Activated CD8-positive, alpha-beta T cell treated with anti-CD3 and anti-CD28 coated beads for 36 hours (primary cell): ENCODE measurements at regions of chr11 and their contacts with region 1.

Region 1: GRCh38 chr11:3834664-3835461 is 5.9 kb downstream of the RHOG start:
- DNase-seq: no peak
- ATAC-seq: no peak
- H3K4me3 Mint-ChIP-seq: peak overlapping the region; percentile 87
- H3K27ac Mint-ChIP-seq: peak overlapping the region; percentile 91
- H3K4me1 Mint-ChIP-seq: peaks cover 74% of the 10 kb centered on the region
- H3K27me3 Mint-ChIP-seq: no peaks in the 10 kb centered on the region
- CTCF ChIP-seq: no peak

Region 2: DNA sequence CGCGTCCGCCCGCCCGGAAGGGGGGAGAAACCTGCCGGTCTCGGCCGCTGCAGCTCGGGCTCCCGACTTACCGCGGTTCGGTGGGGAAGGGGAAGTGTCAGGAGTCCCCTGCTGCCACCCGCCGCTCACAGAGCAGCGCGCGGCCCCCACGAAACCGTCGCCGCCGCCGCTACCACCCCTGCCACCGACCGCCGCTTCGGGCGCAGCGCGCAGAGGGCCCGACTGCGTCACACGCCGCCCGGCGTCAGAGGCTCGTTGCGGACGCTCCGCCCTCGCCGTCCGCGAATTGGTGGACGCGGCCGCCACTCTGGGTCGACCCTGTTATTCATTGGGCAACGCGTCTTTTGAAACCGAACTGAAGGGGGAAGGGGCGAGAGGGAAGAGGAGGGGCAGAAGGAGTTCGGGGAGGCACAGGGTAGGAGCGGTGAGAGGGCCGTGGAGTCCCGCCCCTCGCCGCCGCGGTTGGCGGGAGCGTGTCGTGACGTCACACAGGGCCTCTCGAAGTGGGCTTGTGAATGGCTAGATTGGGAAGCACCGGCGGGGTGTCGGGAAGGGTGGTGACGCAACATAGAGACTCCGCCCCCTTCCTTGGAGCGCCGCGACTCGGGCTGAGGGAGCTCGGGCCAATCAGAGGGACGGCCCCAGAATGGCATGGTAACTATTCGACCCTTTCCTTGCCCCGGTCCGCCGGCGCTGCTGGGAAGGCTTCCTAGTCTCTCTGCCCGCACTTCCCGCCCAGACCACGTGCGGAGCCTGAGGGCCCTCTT is 37.4 kb before region 1 on chr11 and contains the start of gene NUP98:
- CTCF ChIA-PET with region 1: interaction called, 3 read pairs
- POLR2A ChIA-PET with region 1: interaction called, 4 read pairs
- intact Hi-C with region 1: loop called (anchors 5 kb)
- DNase-seq: peak; percentile 100
- ATAC-seq: peak; percentile 98
- H3K4me3 Mint-ChIP-seq: peak within 1 kb of the TSS; percentile 90
- H3K27ac Mint-ChIP-seq: peak within 1 kb of the TSS; percentile 99
- H3K4me1 Mint-ChIP-seq: peaks cover 43% of the 10 kb centered on the region
- H3K27me3 Mint-ChIP-seq: no peaks in the 10 kb centered on the region
- CTCF ChIP-seq: no peak
- total RNA-seq, gene NUP98: 88.4 to 89.9 TPM

Region 3: DNA sequence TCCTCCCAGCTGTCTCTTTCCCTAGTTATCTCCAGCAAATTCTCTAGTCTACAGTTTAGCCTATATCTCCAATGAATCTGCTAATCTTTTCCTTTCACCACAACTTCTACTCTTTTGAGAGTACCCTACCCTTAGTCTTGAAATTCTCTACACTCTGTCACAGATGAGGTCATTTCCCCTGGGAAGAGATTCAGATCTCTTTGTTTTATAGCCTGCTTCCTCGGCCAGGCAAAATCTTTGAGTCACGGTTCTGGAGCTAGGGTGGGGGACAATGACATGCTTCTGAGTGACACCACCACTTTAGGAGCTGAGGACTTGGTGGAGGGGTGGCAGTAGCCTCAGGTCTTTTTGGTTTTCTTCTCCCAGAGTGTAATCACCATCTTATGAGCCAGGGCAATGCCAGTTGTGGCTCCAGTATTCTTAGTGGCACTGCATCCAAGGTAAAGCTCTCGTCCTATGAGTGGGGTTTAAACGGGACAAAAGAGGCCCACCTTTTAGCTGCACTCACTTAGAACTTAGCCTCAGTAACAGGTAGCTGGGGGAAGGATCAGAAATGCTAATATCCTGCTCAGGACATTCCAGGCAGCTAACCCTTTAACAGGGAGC is 161.2 kb after region 1 on chr11:
- CTCF ChIA-PET with region 1: no interaction called
- POLR2A ChIA-PET with region 1: no interaction called
- intact Hi-C with region 1: no loop called
- DNase-seq: no peak
- ATAC-seq: no peak
- H3K4me3 Mint-ChIP-seq: no peak overlapping the region
- H3K27ac Mint-ChIP-seq: no peak overlapping the region
- H3K4me1 Mint-ChIP-seq: peaks cover 48% of the 10 kb centered on the region
- H3K27me3 Mint-ChIP-seq: no peaks in the 10 kb centered on the region
- CTCF ChIP-seq: no peak